Upper lobe of right lung (tissue), 1 donor: ENCODE measurements at regions of chr17 and their contacts with region 1.

Region 1: DNA sequence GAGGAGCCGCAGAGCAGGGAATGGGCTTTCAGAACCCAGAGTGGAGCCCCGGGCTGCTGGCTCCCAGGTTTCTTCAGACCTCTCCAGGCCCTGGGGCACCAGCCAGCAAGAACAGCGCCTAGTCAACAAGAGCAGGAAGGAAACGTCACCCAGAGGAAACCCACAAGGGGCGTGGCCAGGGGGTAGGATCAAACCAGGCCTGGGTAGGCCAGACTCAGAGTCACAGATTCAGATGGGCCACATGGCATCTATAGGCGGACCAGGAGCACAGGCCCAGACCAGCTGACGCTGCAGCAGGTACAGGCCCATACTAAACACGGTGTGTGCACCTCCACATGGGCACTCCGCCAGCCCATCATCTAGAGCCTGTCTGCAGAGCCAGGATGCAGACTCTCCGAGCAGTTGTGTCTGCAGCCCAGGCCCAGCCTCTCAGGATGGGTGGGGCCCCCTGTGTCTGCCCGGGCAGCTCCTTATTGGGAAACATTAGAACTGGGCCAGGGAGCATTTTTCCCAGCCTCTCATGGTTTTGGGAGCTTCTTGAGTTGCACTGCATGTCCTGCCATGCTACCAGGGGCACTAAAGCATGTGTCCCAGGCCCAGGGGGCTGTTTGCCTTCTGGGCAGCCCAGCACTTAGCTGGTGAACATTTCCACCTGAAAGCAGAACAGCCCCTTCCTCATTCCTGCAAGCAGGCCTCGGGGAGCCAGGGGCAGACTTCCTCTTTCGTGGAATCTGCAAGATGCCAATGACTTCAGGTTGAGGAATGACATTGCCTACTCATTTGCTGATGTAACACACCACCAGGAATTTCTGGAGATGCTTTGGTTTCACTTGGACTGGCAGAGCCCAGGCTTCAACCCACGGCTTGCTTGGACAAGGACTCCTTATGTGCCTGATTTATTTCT is at the start of gene NLRP1:
- DNase-seq: peak; percentile 93
- ATAC-seq: peak; percentile 93
- H3K4me3 ChIP-seq: peak within 1 kb of the TSS; percentile 60
- H3K27ac ChIP-seq: peak within 1 kb of the TSS; percentile 87
- H3K4me1 ChIP-seq: peaks cover 35% of the 10 kb centered on the region
- H3K27me3 ChIP-seq: no peaks in the 10 kb centered on the region
- CTCF ChIP-seq: no peak
- total RNA-seq, gene NLRP1: 33.2 TPM

Region 2: DNA sequence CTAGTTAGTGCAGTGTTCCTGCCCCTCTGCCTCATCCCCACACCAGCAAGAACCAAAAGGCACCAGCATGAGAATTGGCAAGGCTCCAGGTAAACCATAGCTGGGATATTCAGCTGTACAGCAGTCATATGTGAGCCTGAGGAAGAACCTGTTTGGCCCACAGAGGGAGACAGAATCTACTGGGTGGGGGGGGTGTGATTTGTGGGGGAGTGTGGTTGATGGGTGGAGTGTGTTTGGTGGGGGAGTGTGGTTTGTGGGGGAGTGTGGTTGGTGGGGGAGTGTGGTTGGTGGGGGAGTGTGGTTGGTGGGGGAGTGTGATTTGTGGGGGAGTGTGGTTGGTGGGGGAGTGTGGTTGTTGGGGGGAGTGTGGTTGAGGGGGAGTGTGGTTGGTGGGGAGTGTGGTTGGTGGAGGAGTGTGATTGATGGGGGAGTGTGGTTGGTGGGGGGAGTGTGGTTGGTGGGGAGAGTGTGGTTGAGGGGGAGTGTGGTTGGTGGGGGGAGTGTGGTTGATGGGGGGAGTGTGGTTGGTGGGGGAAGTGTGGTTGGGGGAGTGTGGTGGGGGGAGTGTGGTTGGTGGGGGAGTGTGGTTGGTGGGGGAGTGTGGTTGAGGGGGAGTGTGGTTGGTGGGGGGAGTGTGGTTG is 731.9 kb before region 1 on chr17:
- intact Hi-C with region 1: no loop called
- DNase-seq: no peak
- ATAC-seq: no peak
- H3K4me3 ChIP-seq: no peak overlapping the region
- H3K27ac ChIP-seq: no peak overlapping the region
- H3K4me1 ChIP-seq: peaks cover 53% of the 10 kb centered on the region
- H3K27me3 ChIP-seq: no peaks in the 10 kb centered on the region
- CTCF ChIP-seq: no peak

Region 3: DNA sequence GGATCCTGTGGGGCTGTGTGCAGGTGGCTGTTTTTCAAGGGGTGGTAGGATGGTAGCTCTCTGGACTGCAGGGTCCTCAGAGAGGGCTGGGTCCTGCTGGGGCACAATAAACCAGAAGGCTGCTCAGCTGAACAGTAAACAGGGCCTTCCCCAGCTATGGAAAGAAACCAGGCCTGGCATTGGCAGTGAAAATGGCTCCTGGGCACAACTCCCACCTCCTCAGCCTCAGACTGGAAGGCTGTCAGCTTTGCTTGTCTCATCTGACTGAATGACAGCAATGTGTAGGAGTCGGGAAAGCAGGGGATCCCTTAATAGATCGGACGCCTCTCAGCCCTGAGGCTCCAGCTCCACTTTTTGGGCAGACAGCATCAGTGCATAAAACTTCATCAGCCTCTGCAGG is 59.4 kb after region 1 on chr17:
- intact Hi-C with region 1: no loop called
- DNase-seq: no peak
- ATAC-seq: no peak
- H3K4me3 ChIP-seq: no peak overlapping the region
- H3K27ac ChIP-seq: no peak overlapping the region
- H3K4me1 ChIP-seq: no peaks in the 10 kb centered on the region
- H3K27me3 ChIP-seq: no peaks in the 10 kb centered on the region
- CTCF ChIP-seq: no peak

Region 4: GRCh38 chr17:6415616-6416015 is 831.0 kb after region 1 on chr17:
- intact Hi-C with region 1: loop called (anchors 5 kb)
- DNase-seq: peak; percentile 53
- ATAC-seq: no peak
- H3K4me3 ChIP-seq: no peak overlapping the region
- H3K27ac ChIP-seq: no peak overlapping the region
- H3K4me1 ChIP-seq: no peaks in the 10 kb centered on the region
- H3K27me3 ChIP-seq: no peaks in the 10 kb centered on the region
- CTCF ChIP-seq: no peak

Region 5: DNA sequence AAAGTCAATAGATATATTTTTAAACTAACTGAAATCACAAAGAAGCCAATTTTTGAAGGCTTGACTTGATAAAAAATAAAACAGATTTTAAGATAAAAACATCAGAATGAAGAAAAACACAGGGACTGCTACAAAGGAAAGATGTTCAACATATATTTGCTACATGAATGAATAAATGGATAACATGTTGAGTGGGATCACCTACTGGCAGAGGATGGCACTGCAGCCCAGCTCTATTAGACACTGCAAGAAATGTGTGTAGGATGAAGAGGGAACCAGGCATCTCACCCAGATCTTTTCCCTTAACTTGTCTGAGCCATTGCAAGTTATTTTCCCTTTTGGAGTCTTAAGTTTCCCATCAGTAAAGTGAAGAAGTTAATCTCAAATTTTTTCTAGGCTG is 846.1 kb after region 1 on chr17:
- intact Hi-C with region 1: loop called (anchors 5 kb)
- DNase-seq: no peak
- ATAC-seq: no peak
- H3K4me3 ChIP-seq: no peak overlapping the region
- H3K27ac ChIP-seq: no peak overlapping the region
- H3K4me1 ChIP-seq: no peaks in the 10 kb centered on the region
- H3K27me3 ChIP-seq: no peaks in the 10 kb centered on the region
- CTCF ChIP-seq: peak; percentile 19